H1 (cell line): ENCODE measurements at regions of chr1 and their contacts with region 1.

Region 1: GRCh38 chr1:151254217-151255213 is at the start of gene PSMD4:
- DNase-seq: peak; percentile 94 to 95
- H3K4me3 ChIP-seq: peak within 1 kb of the TSS; percentile 67 to 92 (median 82)
- H3K27ac ChIP-seq: peak within 1 kb of the TSS; percentile 80
- H3K4me1 ChIP-seq: peaks cover 0 to 1% (median 0%) of the 10 kb centered on the region in 4 experiments; a peak in 1 of 7 replicates
- H3K27me3 ChIP-seq: no peaks in the 10 kb centered on the region
- CTCF ChIP-seq: no peak
- EP300 ChIP-seq: no peak
- POLR2A ChIP-seq: peak; percentile 91 to 98
- RAD21 ChIP-seq: no peak
- total RNA-seq, gene PSMD4: 216 and 226 TPM in 2 replicates

Region 2: GRCh38 chr1:151199873-151200584 is 54.5 kb before region 1 on chr1:
- CTCF ChIA-PET with region 1: interaction called, 10 read pairs
- POLR2A ChIA-PET with region 1: interaction called, 12 read pairs
- DNase-seq: no peak
- H3K4me3 ChIP-seq: peak overlapping the region; percentile 74 to 99 (median 93)
- H3K27ac ChIP-seq: no peak overlapping the region
- H3K4me1 ChIP-seq: peaks cover 2 to 4% (median 3%) of the 10 kb centered on the region in 4 experiments; a peak in 3 of 7 replicates
- H3K27me3 ChIP-seq: no peaks in the 10 kb centered on the region
- CTCF ChIP-seq: no peak
- EP300 ChIP-seq: no peak
- POLR2A ChIP-seq: no peak
- RAD21 ChIP-seq: no peak

Region 3: GRCh38 chr1:151235235-151235634 is 19.3 kb before region 1 on chr1:
- CTCF ChIA-PET with region 1: interaction called, 17 read pairs
- POLR2A ChIA-PET with region 1: interaction called, 6 read pairs
- DNase-seq: no peak
- H3K4me3 ChIP-seq: no peak overlapping the region
- H3K27ac ChIP-seq: no peak overlapping the region
- H3K4me1 ChIP-seq: no peaks in the 10 kb centered on the region
- H3K27me3 ChIP-seq: no peaks in the 10 kb centered on the region
- CTCF ChIP-seq: no peak
- EP300 ChIP-seq: no peak
- POLR2A ChIP-seq: no peak
- RAD21 ChIP-seq: no peak

Region 4: DNA sequence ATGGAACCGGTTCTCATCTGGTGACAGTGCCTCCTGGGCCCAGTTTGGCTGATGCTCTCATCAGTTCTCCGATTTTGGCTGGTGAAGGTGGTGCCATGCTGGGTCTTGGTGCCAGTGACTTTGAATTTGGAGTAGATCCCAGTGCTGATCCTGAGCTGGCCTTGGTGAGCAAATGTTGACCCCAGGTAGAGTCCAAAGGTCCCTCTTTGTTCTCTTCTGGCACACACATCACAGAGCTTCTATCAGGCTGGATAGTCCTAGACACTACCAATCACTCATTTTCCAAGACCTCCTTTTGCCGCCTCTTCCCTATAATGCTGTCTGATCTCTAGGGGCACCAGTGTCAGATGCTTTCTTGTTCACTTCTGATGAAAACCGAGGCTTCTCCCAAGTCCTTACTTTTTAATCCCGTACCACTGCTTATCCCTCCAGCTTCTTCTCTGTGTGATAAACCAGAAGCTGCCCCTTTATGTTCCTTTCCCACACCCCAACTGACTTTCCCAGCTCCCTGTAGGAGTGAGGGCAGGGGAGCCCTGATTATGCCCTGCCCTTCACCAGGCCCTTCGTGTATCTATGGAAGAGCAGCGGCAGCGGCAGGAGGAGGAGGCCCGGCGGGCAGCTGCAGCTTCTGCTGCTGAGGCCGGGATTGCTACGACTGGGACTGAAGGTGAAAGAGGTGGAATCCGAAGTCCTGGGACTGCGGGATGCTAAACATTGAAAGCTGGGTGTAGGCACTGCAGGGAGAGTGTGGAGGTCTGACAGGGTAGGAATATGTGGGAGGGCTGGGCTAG is 11.1 kb after region 1 on chr1:
- CTCF ChIA-PET with region 1: interaction called, 44 read pairs
- POLR2A ChIA-PET with region 1: interaction called, 10 read pairs
- DNase-seq: no peak
- H3K4me3 ChIP-seq: no peak overlapping the region
- H3K27ac ChIP-seq: no peak overlapping the region
- H3K4me1 ChIP-seq: no peaks in the 10 kb centered on the region; a peak in 1 of 7 replicates
- H3K27me3 ChIP-seq: no peaks in the 10 kb centered on the region
- CTCF ChIP-seq: no peak
- EP300 ChIP-seq: no peak
- POLR2A ChIP-seq: no peak
- RAD21 ChIP-seq: no peak

Region 5: GRCh38 chr1:151292207-151293030 is 37.9 kb after region 1 on chr1:
- CTCF ChIA-PET with region 1: interaction called, 3 read pairs
- POLR2A ChIA-PET with region 1: interaction called, 10 read pairs
- DNase-seq: no peak
- H3K4me3 ChIP-seq: no peak overlapping the region
- H3K27ac ChIP-seq: no peak overlapping the region
- H3K4me1 ChIP-seq: peaks cover 6 to 21% (median 15%) of the 10 kb centered on the region in 4 experiments
- H3K27me3 ChIP-seq: no peaks in the 10 kb centered on the region
- CTCF ChIP-seq: peak; percentile 23 to 38 (median 28); a peak in 3 of 4 replicates
- EP300 ChIP-seq: no peak
- POLR2A ChIP-seq: peak; percentile 51 to 53
- RAD21 ChIP-seq: peak; percentile 6 to 27; a peak in 2 of 4 replicates